Upper lobe of right lung (tissue), 1 donor: ENCODE measurements at regions of chr9 and their contacts with region 1.

Region 1: DNA sequence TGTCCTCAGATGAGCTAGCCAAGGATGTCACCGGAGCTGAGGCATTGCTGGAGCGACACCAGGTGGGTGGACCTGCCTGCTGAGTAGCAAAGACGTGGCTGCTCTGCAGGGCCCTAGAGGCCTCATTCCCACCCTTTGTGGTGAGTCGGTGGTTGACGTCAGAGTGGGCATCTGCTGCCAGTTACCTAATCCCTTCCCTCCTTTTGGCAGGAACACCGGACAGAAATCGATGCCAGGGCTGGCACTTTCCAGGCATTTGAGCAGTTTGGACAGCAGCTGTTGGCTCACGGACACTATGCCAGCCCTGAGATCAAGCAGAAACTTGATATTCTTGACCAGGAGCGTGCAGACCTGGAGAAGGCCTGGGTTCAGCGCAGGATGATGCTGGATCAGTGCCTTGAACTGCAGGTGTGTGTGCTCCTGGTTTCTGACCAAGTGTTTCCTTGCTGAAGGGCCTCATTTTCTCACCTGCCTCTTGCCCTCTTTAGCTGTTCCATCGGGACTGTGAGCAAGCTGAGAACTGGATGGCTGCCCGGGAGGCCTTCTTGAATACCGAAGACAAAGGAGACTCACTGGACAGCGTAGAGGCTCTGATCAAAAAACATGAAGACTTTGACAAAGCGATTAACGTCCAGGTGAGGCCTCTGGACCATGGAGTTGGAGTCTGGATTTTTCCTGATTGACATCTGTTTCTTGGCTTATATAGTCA is 48.9 kb downstream of the DYNC2I2 start:
- DNase-seq: no peak
- ATAC-seq: peak; percentile 42
- H3K4me3 ChIP-seq: no peak overlapping the region
- H3K27ac ChIP-seq: no peak overlapping the region
- H3K4me1 ChIP-seq: no peaks in the 10 kb centered on the region
- H3K27me3 ChIP-seq: no peaks in the 10 kb centered on the region
- CTCF ChIP-seq: no peak

Region 2: GRCh38 chr9:128747234-128747633 is 139.4 kb after region 1 on chr9:
- intact Hi-C with region 1: no loop called
- DNase-seq: no peak
- ATAC-seq: no peak
- H3K4me3 ChIP-seq: no peak overlapping the region
- H3K27ac ChIP-seq: no peak overlapping the region
- H3K4me1 ChIP-seq: no peaks in the 10 kb centered on the region
- H3K27me3 ChIP-seq: no peaks in the 10 kb centered on the region
- CTCF ChIP-seq: no peak

Region 3: GRCh38 chr9:128969491-128969890 is 361.7 kb after region 1 on chr9:
- intact Hi-C with region 1: loop called (anchors 10 kb)
- DNase-seq: no peak
- ATAC-seq: no peak
- H3K4me3 ChIP-seq: no peak overlapping the region
- H3K27ac ChIP-seq: no peak overlapping the region
- H3K4me1 ChIP-seq: no peaks in the 10 kb centered on the region
- H3K27me3 ChIP-seq: no peaks in the 10 kb centered on the region
- CTCF ChIP-seq: no peak